SK-N-SH (cell line): ENCODE measurements at regions of chr20 and their contacts with region 1.

Region 1: GRCh38 chr20:64038565-64039292 is 2.7 kb downstream of the C20orf204 start:
- DNase-seq: peak; percentile 92
- H3K4me3 ChIP-seq: peak overlapping the region; percentile 42 to 57
- H3K27ac ChIP-seq: no peak overlapping the region
- H3K4me1 ChIP-seq: peaks cover 0 to 13% of the 10 kb centered on the region in 2 experiments; a peak in 1 of 4 replicates
- H3K27me3 ChIP-seq: no peaks in the 10 kb centered on the region
- CTCF ChIP-seq: peak; percentile 65
- EP300 ChIP-seq: no peak
- RAD21 ChIP-seq: peak; percentile 57

Region 2: GRCh38 chr20:63884506-63885263 is 154.0 kb before region 1 on chr20:
- CTCF ChIA-PET with region 1: no interaction called
- POLR2A ChIA-PET with region 1: no interaction called
- DNase-seq: peak; percentile 63
- H3K4me3 ChIP-seq: no peak overlapping the region
- H3K27ac ChIP-seq: peak overlapping the region in 1 of 2 experiments; percentile 55; a peak in 1 of 4 replicates
- H3K4me1 ChIP-seq: peaks cover 0 to 11% of the 10 kb centered on the region in 2 experiments; a peak in 1 of 4 replicates
- H3K27me3 ChIP-seq: no peaks in the 10 kb centered on the region
- CTCF ChIP-seq: no peak
- EP300 ChIP-seq: no peak
- RAD21 ChIP-seq: no peak

Region 3: GRCh38 chr20:63973636-63974402 is 64.9 kb before region 1 on chr20:
- CTCF ChIA-PET with region 1: interaction called, 31 read pairs
- POLR2A ChIA-PET with region 1: no interaction called
- DNase-seq: peak; percentile 95
- H3K4me3 ChIP-seq: peak overlapping the region; percentile 7 to 12; a peak in 2 of 4 replicates
- H3K27ac ChIP-seq: no peak overlapping the region
- H3K4me1 ChIP-seq: peaks cover 5 to 17% of the 10 kb centered on the region in 2 experiments; a peak in 3 of 4 replicates
- H3K27me3 ChIP-seq: no peaks in the 10 kb centered on the region
- CTCF ChIP-seq: peak; percentile 98
- EP300 ChIP-seq: no peak
- RAD21 ChIP-seq: peak; percentile 91

Region 4: DNA sequence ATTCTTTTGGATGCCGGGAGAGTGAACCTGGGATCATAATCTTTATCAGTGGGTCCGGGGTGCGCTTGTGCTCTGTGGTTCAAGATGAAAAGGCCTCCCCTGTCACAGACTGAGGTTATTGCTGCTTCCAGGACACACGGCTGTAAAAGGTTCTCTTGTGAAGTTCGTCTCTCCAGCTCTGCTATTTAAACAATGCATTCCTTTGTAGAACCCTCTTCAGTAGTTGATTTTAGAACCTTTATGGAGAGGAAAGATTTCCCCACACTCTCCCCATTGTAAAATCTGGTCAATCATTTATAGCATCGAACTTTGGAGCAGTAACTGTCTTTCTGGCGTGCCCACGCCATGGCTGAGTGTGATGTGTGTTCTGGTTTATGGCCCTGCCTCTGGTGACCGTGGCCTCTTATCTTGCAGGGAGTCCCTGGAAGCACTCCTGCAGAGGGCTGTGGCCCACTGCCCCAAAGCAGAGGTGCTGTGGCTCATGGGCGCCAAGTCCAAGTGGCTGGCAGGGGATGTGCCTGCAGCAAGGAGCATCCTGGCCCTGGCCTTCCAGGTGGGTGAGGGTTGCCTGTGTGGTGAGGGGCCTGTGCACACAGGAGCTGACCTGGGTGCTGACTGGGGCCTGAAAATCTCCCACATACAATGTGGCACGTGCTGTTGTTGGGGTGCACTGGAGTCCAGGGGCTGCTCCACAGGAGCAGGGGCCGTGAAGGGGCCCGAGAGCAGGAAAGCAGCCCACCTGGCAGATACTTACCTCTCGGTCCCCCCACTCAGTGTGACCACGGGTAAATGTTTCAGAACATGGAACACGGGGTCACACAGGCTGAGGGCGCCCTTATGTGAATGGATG is 14.4 kb before region 1 on chr20:
- CTCF ChIA-PET with region 1: interaction called, 74 read pairs
- POLR2A ChIA-PET with region 1: interaction called, 3 read pairs
- DNase-seq: no peak
- H3K4me3 ChIP-seq: no peak overlapping the region
- H3K27ac ChIP-seq: peak overlapping the region in 1 of 2 experiments; percentile 74; a peak in 1 of 4 replicates
- H3K4me1 ChIP-seq: peaks cover 0 to 48% of the 10 kb centered on the region in 2 experiments; a peak in 1 of 4 replicates
- H3K27me3 ChIP-seq: no peaks in the 10 kb centered on the region
- CTCF ChIP-seq: no peak
- EP300 ChIP-seq: no peak
- RAD21 ChIP-seq: no peak

Region 5: DNA sequence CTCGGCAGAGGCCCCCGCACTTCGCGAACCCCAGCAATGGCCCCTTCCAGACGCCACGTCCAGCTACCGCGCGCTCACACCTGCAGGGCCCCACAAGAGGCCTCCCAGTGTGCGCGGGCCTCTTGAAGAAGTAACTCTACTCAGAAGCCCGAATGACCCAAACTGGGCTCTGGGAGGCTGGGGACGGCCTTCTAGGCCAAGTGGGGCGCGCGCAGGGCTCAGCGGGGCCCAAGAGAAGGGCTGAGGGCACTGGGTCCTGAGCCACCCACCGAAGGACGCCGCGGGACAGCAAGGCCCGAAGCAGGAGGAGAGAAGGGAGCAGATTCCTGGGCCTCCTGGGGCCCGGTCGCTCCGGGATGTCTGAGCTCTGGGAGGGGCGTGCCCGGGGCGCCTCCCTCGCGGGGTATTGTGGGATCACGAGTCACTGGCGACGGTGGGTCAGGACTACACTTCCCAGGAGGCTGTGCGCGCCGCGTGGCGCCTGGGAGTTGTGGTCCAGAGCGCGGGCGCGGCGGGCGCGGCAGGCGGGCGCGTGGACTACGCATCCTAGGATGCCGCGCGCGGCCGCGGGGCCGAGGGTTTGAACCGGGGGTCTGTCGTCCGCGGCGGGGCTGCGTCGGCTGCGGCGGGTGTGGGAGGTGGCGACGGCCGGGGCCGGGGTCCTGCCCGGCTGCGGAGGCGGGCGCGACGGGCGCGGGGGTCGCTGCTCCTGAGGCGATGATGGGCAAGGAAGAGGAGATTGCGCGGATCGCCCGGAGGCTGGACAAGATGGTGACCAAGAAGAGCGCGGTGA is 24.1 kb after region 1 on chr20 and contains the start of gene TCEA2:
- CTCF ChIA-PET with region 1: interaction called, 61 read pairs
- POLR2A ChIA-PET with region 1: interaction called, 4 read pairs
- DNase-seq: peak; percentile 99
- H3K4me3 ChIP-seq: peak within 1 kb of the TSS; percentile 91 to 93
- H3K27ac ChIP-seq: peak within 1 kb of the TSS; percentile 64 to 83
- H3K4me1 ChIP-seq: peaks cover 14 to 17% of the 10 kb centered on the region in 2 experiments; a peak in 2 of 4 replicates
- H3K27me3 ChIP-seq: no peaks in the 10 kb centered on the region
- CTCF ChIP-seq: no peak
- EP300 ChIP-seq: no peak; a peak in 1 of 4 replicates
- RAD21 ChIP-seq: no peak
- polyA plus RNA-seq, gene TCEA2: 53.5 and 98.9 TPM in 2 replicates

Region 6: DNA sequence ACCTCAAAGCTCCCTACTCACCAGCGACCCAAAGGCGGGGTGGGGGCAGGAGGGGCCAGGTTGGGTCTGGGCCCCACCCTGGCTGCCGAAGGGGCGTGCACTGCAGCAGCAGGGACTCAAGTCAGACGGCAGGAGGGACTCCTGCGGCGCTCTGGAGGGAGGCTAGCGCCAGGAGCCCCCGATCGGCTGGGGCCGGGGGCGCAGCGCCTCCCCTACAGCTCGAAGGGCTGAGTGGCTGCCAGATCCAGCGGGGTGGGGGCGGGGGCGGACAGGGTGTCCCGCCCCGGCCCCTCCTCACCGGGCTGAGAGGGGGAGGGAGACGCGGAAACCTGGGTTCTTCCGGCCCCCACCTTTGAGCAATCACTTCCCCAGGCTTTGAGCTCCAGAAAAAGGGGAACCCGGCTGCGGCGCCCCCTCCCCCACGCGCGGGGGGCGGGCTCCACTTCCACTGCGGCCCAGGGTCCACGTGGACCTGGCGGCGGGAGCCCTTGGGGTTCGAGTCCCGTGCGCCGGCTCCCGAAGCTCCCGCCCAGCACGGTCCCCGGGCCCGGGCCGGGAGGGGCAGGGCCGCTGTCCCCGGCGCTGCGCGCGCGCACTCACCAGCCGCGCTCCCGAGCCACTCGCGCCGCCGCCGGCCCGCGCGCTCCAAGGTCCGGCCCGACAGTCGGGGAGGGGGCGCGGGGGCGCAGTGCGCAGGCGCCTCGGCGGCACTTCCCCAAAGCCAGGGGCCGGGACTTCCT is 40.7 kb after region 1 on chr20 and contains the start of gene RGS19:
- CTCF ChIA-PET with region 1: interaction called, 16 read pairs
- POLR2A ChIA-PET with region 1: no interaction called
- DNase-seq: peak; percentile 96
- H3K4me3 ChIP-seq: peak within 1 kb of the TSS; percentile 76 to 80
- H3K27ac ChIP-seq: peak within 1 kb of the TSS in 1 of 2 experiments; percentile 68; a peak in 2 of 4 replicates
- H3K4me1 ChIP-seq: peaks cover 13 to 34% of the 10 kb centered on the region in 2 experiments; a peak in 3 of 4 replicates
- H3K27me3 ChIP-seq: no peaks in the 10 kb centered on the region
- CTCF ChIP-seq: no peak
- EP300 ChIP-seq: no peak
- RAD21 ChIP-seq: no peak
- polyA plus RNA-seq, gene RGS19: 18.7 and 20.5 TPM in 2 replicates

Region 7: GRCh38 chr20:64119681-64120341 is 81.1 kb after region 1 on chr20:
- CTCF ChIA-PET with region 1: interaction called, 52 read pairs
- POLR2A ChIA-PET with region 1: no interaction called
- DNase-seq: peak; percentile 24
- H3K4me3 ChIP-seq: no peak overlapping the region
- H3K27ac ChIP-seq: no peak overlapping the region
- H3K4me1 ChIP-seq: no peaks in the 10 kb centered on the region; a peak in 1 of 4 replicates
- H3K27me3 ChIP-seq: peaks cover 28% of the 10 kb centered on the region
- CTCF ChIP-seq: no peak
- EP300 ChIP-seq: no peak
- RAD21 ChIP-seq: no peak